AG04450 (cell line): ENCODE measurements at regions of chr9 and their contacts with region 1.

Region 1: DNA sequence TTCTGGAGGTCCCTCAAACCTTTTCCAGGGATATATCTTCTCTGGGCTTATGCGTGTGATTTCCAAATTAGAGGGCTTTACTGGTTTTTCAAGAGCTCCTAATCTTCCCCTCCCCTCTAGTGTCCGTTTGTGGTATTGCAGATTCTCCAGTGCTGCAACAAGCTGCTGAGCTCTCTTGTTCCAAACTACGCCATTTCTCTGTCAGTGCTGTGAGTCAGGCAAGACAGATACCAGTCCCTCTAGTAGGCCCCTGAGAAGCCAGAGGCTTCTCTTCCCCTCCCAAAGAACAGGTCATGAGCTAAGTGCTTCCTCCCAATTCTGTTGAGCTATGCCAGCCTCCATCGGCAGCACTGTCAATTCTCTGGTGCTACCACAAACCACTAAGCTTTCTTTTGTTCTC is 149.5 kb downstream of the FANCC start:
- DNase-seq: peak; percentile 89
- H3K4me3 ChIP-seq: no peak overlapping the region
- H3K27ac ChIP-seq: peak overlapping the region; percentile 57
- H3K27me3 ChIP-seq: no peaks in the 10 kb centered on the region
- CTCF ChIP-seq: peak; percentile 96

Region 2: DNA sequence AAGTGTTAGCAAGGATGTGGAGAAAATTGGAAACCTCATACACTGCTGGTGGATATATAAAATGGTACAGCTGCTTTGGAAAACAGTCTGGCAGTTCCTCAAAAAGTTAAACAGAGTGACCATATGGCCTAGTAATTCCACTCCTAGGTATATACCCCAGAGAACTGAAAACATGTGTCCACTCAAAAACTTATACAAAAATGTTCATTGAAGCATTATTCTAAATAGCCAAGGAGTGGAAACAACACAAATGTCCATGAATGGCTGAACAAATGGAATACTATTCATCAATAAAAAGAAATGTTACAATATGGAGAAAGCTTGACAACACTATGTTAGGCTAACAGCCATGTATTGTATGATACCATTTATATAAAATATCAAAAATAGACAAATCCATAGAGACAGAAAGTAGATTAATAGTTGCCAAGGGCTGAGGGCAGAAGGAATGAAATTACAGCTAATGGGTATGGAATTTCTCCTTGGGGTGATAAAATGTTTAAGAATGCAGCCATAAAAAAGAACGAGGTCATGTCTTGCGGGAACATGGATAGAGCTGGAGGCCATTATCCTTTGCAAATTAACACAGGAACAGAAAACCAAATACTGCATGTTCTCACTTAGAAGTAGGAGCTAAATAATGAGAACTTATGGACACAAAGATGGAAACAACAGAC is 495.0 kb before region 1 on chr9:
- CTCF ChIA-PET with region 1: interaction called, 27 read pairs
- POLR2A ChIA-PET with region 1: interaction called, 3 read pairs
- DNase-seq: no peak
- H3K4me3 ChIP-seq: no peak overlapping the region
- H3K27ac ChIP-seq: no peak overlapping the region
- H3K27me3 ChIP-seq: no peaks in the 10 kb centered on the region
- CTCF ChIP-seq: no peak

Region 3: DNA sequence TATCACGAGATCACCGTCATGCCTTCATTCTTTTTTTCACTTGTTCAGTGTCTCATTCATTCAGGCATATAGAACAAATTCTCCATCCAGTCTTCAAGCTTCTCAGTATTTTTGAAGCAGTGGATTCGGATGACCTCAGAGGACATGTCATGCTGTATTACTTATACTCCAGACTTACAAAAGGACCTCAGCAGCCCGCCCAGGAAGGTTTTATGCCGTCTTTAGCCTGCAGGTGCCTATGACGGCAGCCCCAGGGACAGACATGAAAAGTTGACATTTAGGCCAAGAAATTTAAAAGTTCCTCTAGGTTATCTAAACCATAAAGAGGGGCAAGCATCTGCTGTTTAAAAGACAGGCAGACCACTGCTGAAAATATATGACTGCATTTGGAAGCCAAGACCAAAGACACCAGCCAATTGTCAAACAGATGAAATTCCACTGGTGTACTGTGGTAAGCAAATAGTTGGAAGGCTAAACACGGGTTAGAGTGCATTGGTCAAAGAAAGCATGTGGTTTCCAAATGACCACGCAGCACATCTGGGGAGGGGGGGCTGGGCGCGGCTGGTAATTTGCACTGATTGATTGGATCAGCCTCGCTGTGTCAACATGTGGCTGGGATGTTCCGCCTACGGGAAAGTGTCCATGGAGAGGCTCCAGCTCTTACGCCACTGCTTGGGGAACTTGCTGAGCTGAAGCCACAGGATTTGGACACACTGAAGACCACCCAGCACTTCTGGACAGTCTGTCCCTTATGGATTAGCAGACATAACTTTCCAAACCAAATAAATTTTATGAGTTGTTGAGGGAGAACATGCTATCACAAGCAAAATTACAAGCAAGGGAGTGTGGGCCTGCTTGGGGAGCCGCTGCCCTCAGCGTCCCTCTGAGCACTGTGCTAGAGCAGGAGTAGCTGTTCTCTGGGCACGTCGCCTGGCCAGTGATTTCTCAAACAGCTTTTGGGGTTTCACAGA is 24.1 kb before region 1 on chr9:
- CTCF ChIA-PET with region 1: interaction called, 24 read pairs
- POLR2A ChIA-PET with region 1: no interaction called
- DNase-seq: peak; percentile 60
- H3K4me3 ChIP-seq: no peak overlapping the region
- H3K27ac ChIP-seq: peak overlapping the region; percentile 57
- H3K27me3 ChIP-seq: no peaks in the 10 kb centered on the region
- CTCF ChIP-seq: no peak

Region 4: GRCh38 chr9:95157481-95158151 is 10.4 kb before region 1 on chr9:
- CTCF ChIA-PET with region 1: interaction called, 38 read pairs
- POLR2A ChIA-PET with region 1: no interaction called
- DNase-seq: peak; percentile 87
- H3K4me3 ChIP-seq: no peak overlapping the region
- H3K27ac ChIP-seq: no peak overlapping the region
- H3K27me3 ChIP-seq: no peaks in the 10 kb centered on the region
- CTCF ChIP-seq: no peak

Region 5: GRCh38 chr9:95181226-95181818 is 13.3 kb after region 1 on chr9:
- CTCF ChIA-PET with region 1: interaction called, 54 read pairs
- POLR2A ChIA-PET with region 1: no interaction called
- DNase-seq: no peak
- H3K4me3 ChIP-seq: no peak overlapping the region
- H3K27ac ChIP-seq: no peak overlapping the region
- H3K27me3 ChIP-seq: no peaks in the 10 kb centered on the region
- CTCF ChIP-seq: peak; percentile 43

Region 6: DNA sequence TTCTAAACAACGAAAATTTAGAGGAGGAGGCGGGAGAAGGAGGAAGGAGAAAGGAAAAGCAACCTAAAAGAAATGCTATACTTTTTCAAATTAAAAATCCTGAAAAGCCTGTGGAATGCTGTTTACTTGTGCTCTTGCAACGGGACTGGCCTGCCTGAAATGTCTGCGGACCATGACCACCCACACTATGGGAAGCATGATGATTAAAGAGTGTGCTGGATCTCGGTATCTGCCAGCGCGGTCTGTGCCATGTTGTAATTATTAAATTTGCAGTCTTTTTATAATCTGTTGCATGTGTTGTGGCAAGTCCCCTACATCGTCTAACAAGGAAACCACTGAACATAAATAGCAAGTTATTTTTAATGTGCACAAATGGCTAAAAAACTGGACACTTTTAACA is 38.1 kb after region 1 on chr9:
- CTCF ChIA-PET with region 1: interaction called, 16 read pairs
- POLR2A ChIA-PET with region 1: no interaction called
- DNase-seq: no peak
- H3K4me3 ChIP-seq: no peak overlapping the region
- H3K27ac ChIP-seq: no peak overlapping the region
- H3K27me3 ChIP-seq: no peaks in the 10 kb centered on the region
- CTCF ChIP-seq: no peak